Activated T-helper 2 cell treated with anti-CD3 and anti-CD28 coated beads, Interferon-gamma antibody, Interleukin-2, Interleukin-4, amounts not matched to agents 10 μg/mL and 5 μg/mL and 100 μg/mL, durations not matched to agents 14 hours and 24 hours and 36 hours (primary cell): ENCODE measurements at regions of chr7 and their contacts with region 1.

Region 1: DNA sequence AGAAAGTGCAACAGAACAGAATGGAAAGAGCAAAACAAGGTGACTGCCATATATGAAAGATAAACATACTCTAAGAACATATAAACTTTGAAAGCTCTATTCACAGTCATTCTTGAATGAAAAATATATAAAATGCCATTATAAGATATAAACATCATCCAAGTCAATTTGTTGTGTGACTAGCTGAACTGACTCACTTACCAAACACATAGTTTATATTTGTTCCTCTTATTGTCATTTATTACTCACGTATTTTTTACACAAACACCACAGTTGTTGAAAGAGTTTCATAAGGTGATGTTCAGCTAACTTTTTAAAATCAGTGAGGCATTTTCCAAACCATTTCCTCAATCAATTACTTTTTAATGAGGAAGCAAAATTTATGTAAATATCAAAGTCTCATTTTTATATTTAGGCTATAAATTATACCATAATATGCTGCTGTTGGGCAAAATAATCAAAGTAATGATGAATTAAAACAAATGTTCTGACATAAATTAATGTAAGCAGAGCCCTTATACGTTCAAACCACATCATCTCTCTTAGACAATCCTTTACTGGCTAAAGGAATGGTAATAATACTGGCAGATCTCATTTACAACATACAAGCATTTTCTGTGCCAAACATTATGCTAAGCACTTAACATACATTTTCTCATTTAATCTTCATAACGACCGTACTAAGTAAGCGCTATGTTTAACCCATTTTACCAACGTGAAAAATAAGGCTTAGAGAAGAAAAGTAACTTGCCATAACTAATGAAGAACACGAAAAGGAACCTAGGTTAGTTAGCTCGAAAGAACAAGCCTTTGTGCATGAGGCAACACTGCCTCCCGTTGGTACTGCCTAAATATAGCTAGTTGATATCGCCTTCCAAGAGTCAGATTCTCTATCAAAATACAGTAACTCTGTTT is 7.3 kb downstream of the LRRN3 start:
- DNase-seq: peak; percentile 56
- H3K4me3 Mint-ChIP-seq: peak overlapping the region; percentile 67
- H3K27ac Mint-ChIP-seq: peak overlapping the region; percentile 77
- H3K4me1 Mint-ChIP-seq: peaks cover 77% of the 10 kb centered on the region
- H3K27me3 Mint-ChIP-seq: no peaks in the 10 kb centered on the region

Region 2: DNA sequence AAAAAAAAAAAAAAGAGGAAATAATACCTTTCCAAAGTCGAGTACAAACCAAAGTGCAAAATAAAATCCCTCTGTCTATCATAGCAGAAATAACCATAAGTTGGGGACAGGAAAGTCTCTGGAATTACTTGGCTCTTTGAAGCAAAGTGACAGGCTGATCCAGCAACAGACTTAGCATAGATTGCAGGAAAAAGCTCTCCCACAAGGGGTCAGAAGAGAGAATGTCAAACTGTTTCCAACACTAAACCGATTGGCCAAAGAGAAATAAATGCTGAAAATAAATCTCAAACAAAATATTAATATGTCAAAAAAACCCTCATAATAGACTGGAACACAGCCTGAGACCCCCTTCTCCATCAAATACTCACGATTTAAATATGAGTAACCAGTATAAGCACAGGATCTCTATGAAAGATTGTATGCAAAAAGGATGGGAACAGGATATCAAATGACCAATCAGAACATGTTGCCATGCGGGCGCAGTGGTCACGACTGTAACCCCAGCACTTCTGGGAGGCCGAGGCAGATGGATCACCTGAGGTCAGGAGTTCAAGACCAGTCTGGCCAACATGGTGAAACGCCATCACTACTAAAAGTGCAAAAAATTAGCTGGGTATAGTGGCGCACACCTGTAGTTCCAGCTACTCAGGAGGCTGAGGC is 1008.0 kb before region 1 on chr7:
- intact Hi-C with region 1: loop called (anchors 2 kb)
- DNase-seq: no peak
- H3K4me3 Mint-ChIP-seq: no peak overlapping the region
- H3K27ac Mint-ChIP-seq: no peak overlapping the region
- H3K4me1 Mint-ChIP-seq: no peaks in the 10 kb centered on the region
- H3K27me3 Mint-ChIP-seq: no peaks in the 10 kb centered on the region

Region 3: GRCh38 chr7:111083413-111083812 is 14.9 kb before region 1 on chr7:
- intact Hi-C with region 1: loop called (anchors 2 kb)
- DNase-seq: peak; percentile 70
- H3K4me3 Mint-ChIP-seq: peak overlapping the region; percentile 64
- H3K27ac Mint-ChIP-seq: peak overlapping the region; percentile 94
- H3K4me1 Mint-ChIP-seq: peaks cover 72% of the 10 kb centered on the region
- H3K27me3 Mint-ChIP-seq: no peaks in the 10 kb centered on the region

Region 4: DNA sequence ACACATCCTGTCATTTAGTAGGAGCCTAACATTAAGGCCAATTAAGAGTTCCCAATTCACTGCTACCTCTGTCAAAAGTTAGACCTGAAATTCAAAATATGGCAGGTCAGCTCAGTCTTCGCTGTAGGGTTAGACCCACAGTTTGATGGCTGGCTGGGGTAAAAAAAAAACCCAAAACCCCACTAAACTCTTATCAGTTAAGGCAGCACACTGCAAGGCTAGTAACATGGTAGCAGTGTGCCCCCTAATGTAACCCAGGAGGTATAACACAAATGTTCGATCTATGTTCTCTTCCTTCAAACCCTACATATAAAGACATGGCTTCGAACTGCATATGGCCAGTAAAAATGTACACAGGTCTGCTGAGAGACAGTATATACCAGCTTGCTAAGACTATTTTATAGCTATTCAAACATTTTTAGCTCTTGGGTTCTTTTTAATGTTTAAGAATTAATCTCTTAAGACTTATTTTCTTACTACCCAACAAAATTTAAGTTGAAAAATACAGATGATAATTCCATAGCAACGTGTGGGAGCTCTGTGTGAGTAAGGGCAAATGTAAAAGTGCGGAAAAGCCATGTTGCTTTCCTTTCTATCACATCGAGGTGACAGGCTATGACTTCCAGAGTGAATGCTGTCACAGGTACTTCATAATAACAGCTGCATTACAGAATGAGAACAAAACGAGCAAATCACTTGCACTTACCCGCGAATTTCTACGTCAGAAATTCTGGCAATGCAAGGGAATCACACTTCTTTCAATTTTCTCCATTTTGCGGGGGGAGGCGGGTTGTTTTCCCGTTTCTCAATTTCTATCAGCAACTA is 632.4 kb after region 1 on chr7:
- intact Hi-C with region 1: loop called (anchors 2 kb)
- DNase-seq: no peak
- H3K4me3 Mint-ChIP-seq: no peak overlapping the region
- H3K27ac Mint-ChIP-seq: no peak overlapping the region
- H3K4me1 Mint-ChIP-seq: no peaks in the 10 kb centered on the region
- H3K27me3 Mint-ChIP-seq: no peaks in the 10 kb centered on the region